Activated CD4-positive, alpha-beta T cell treated with anti-CD3 and anti-CD28 coated beads for 36 hours (primary cell): ENCODE measurements at regions of chr12 and their contacts with region 1.

Region 1: GRCh38 chr12:55619354-55620138 is 17.1 kb upstream of the OR10P1 start:
- DNase-seq: peak; percentile 41
- ATAC-seq: peak; percentile 75
- H3K4me3 Mint-ChIP-seq: no peak overlapping the region
- H3K27ac Mint-ChIP-seq: no peak overlapping the region
- H3K4me1 Mint-ChIP-seq: peaks cover 8% of the 10 kb centered on the region
- H3K27me3 Mint-ChIP-seq: peaks cover 37% of the 10 kb centered on the region

Region 2: DNA sequence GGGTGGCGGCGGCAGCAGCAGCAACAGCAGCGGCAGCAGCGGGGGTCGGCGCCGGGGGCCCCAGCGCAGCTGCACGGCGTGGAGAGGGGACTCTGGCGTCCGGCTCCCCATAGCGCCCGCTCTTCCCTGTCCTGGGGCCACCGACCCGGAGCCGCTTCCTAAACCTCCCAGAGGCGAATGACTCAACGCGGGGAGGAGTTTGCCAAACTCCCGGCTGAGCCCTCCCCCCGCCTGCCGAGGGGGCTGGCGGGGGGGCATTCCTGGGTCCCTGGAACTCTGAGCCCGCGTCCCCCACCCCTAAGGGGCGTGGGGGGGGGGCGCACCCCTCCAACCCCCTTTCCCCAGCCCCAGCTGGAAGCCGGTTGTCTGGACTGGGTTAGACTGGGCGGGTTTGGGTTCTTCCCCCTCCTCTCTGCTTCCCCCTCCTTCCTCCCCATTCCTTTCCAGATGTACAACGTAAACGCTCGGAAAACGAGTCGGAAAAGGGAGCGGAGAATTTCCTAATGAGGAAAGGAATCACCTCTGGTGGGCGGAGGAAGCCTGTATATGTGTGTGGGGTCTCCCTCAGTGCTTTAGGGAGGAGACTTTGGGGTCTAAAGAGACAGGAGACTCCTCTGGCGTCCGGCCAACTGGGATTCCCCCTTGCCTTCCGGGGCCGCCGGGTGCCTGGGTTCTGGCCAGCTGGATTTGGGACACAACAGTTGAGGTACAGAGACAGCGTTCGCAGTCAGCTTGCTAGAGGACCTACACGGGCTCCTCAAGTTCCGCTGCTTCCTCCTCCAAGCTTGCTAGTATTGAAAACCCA is 1200.3 kb before region 1 on chr12 and contains the start of gene ITGA5:
- CTCF ChIA-PET with region 1: no interaction called
- POLR2A ChIA-PET with region 1: no interaction called
- intact Hi-C with region 1: loop called in 1 of 2 experiments (anchors 10 kb)
- DNase-seq: peak; percentile 66
- ATAC-seq: peak; percentile 42
- H3K4me3 Mint-ChIP-seq: peak within 1 kb of the TSS; percentile 96
- H3K27ac Mint-ChIP-seq: peak within 1 kb of the TSS; percentile 95
- H3K4me1 Mint-ChIP-seq: peaks cover 42% of the 10 kb centered on the region
- H3K27me3 Mint-ChIP-seq: no peaks in the 10 kb centered on the region
- total RNA-seq, gene ITGA5: 38.6 to 58.0 TPM

Region 3: GRCh38 chr12:54984658-54985376 is 634.7 kb before region 1 on chr12 and contains the start of gene TESPA1:
- CTCF ChIA-PET with region 1: no interaction called
- POLR2A ChIA-PET with region 1: no interaction called
- intact Hi-C with region 1: loop called in 1 of 2 experiments (anchors 10 kb)
- DNase-seq: peak; percentile 92
- ATAC-seq: peak; percentile 87
- H3K4me3 Mint-ChIP-seq: peak within 1 kb of the TSS; percentile 78
- H3K27ac Mint-ChIP-seq: peak within 1 kb of the TSS; percentile 95
- H3K4me1 Mint-ChIP-seq: peaks cover 64% of the 10 kb centered on the region
- H3K27me3 Mint-ChIP-seq: no peaks in the 10 kb centered on the region
- total RNA-seq, gene TESPA1: 81.0 to 107 TPM

Region 4: GRCh38 chr12:55385911-55386310 is 233.6 kb before region 1 on chr12:
- CTCF ChIA-PET with region 1: no interaction called
- POLR2A ChIA-PET with region 1: no interaction called
- intact Hi-C with region 1: loop called in 1 of 2 experiments (anchors 10 kb)
- DNase-seq: no peak
- ATAC-seq: no peak
- H3K4me3 Mint-ChIP-seq: no peak overlapping the region
- H3K27ac Mint-ChIP-seq: no peak overlapping the region
- H3K4me1 Mint-ChIP-seq: no peaks in the 10 kb centered on the region
- H3K27me3 Mint-ChIP-seq: peaks cover 2% of the 10 kb centered on the region

Region 5: DNA sequence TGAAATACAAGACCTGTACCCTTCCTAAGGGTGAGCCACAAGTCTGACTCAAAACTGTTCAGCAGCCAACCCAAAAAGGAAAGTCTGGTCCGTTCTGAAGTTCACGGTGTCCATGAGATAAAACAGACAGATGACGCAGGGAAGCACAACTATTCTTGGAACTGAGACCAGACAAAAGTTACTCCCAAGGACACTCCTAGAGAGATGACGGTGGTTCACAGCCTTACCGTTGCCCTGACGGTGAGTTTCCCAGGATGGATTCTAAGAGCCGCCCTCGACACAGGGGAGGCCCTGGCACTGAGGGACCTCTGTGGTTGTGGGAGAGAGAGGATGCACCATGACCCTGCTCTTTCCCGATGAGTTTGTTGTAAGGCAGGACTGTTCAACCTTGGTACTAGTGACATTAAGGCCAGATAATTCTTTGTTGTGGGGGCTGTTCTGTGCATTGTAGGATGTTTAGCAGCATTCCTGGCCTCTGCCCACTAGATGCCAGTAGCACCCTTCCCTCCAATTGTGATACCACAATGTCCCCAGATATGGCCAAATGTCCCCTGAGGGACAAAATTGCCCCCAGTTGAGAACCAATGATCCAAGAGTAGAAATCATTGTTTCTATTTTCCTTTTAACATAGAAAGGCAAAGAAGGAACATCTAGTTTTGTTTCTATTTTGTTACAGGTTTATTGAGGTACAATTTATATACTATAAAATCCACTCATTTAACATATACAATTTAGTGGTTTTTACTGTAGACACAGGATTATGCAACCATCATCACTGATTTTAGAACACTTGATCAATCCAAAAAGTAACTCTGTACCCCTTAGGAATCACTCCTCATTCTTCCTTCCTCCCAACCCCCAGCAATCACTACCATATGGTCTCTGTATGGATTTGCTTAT is 40.2 kb after region 1 on chr12:
- CTCF ChIA-PET with region 1: interaction called, 25 read pairs
- POLR2A ChIA-PET with region 1: no interaction called
- intact Hi-C with region 1: loop called in 1 of 2 experiments (anchors 2 kb)
- DNase-seq: peak; percentile 22
- ATAC-seq: peak; percentile 44
- H3K4me3 Mint-ChIP-seq: no peak overlapping the region
- H3K27ac Mint-ChIP-seq: no peak overlapping the region
- H3K4me1 Mint-ChIP-seq: no peaks in the 10 kb centered on the region
- H3K27me3 Mint-ChIP-seq: peaks cover 2% of the 10 kb centered on the region

Region 6: DNA sequence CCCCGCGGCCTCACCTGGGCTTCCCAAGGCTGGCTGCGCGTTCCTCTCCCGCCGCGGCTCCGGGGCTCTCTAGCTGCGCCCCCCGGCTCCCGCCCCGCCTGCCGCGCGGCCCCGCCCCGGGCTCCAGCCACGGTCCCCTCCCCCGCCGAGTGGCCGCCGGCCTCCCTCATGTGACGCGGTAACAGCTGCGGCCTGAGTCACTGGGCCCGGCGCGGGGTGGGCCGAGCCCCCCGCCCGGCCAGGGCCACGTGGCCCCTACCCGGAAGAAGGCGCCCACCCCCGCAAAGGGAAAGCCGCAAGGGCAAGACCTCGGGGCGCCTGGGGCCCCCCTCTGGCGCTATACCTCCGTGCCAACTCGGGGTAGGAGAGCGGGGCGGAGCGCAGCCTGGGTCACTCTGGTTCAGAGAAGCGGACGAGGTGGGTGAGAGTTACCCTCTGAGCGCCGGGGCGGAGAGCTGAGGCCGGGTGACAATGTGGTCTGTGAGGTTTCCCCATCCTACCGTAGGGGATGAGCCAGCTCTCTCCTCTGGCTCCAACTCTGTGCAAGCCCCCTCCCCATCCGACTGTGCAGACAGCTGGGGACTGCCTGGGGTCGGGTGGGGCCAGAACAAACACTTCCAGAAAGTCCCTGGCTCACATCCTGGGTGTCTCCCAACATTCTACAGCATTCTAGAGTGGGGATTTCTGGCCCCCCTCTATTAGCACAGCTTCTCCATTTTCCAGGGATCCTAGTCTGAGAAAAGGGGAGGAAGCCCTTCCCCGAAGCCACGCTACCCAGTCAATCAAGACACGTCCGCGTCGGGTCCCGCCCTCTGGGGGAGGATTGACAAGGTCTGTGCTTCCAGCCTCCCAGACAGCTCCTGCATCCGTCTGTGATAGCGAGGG is 109.6 kb after region 1 on chr12 and contains the start of gene CD63:
- CTCF ChIA-PET with region 1: no interaction called
- POLR2A ChIA-PET with region 1: no interaction called
- intact Hi-C with region 1: no loop called
- DNase-seq: peak; percentile 89
- ATAC-seq: peak; percentile 73
- H3K4me3 Mint-ChIP-seq: peak within 1 kb of the TSS; percentile 93
- H3K27ac Mint-ChIP-seq: peak within 1 kb of the TSS; percentile 95
- H3K4me1 Mint-ChIP-seq: peaks cover 34% of the 10 kb centered on the region
- H3K27me3 Mint-ChIP-seq: no peaks in the 10 kb centered on the region
- total RNA-seq, gene CD63: 113 to 122 TPM

Region 7: GRCh38 chr12:55893723-55894122 is 274.2 kb after region 1 on chr12:
- CTCF ChIA-PET with region 1: no interaction called
- POLR2A ChIA-PET with region 1: no interaction called
- intact Hi-C with region 1: no loop called
- DNase-seq: no peak
- ATAC-seq: no peak
- H3K4me3 Mint-ChIP-seq: no peak overlapping the region
- H3K27ac Mint-ChIP-seq: no peak overlapping the region
- H3K4me1 Mint-ChIP-seq: peaks cover 1% of the 10 kb centered on the region
- H3K27me3 Mint-ChIP-seq: no peaks in the 10 kb centered on the region

Region 8: GRCh38 chr12:56636675-56637540 is 1017.4 kb after region 1 on chr12:
- CTCF ChIA-PET with region 1: no interaction called
- POLR2A ChIA-PET with region 1: no interaction called
- intact Hi-C with region 1: no loop called
- DNase-seq: peak; percentile 98
- ATAC-seq: peak; percentile 73
- H3K4me3 Mint-ChIP-seq: peak overlapping the region; percentile 87
- H3K27ac Mint-ChIP-seq: peak overlapping the region; percentile 92
- H3K4me1 Mint-ChIP-seq: peaks cover 60% of the 10 kb centered on the region
- H3K27me3 Mint-ChIP-seq: no peaks in the 10 kb centered on the region